B cell (primary cell): ENCODE measurements at regions of chr17 and their contacts with region 1.

Region 1: DNA sequence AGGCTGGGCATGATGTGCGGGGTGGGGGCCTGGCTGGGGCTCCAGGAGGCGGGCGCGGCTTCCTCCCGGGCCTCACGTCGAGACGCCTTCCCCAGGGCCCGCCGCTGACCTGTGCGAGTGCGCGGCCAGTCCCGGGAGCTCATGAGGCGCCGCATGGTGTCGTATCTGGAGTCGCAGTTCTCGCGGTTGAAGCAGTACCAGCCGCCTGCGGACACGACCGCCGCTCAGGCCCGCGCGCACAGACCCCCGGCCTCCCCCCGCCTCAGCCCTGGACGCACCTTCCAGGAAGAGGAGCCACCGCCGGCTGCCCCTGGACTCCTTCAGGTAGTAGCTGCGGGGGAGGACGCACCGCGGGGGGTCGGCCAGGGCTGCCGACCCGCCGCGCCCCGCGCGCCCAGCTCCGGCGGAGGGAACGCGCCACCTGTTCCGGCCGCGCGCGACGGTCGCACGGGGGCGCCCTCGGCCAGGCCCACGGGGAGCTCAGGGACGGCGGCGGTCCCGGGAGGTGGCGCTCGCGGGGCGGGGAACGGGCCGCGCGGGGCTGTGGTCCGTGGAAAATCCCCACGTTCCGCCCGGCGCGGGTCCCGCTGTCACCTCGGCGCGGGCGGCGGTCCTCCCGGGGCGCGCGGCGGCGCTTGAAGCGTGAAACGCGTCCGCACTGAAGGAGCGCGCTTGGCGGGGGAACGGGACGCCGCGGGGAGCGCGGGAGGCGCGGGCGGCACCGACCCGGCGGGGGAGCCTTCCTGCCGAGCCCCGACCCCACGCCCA is 1.4 kb downstream of the NOTUM start:
- DNase-seq: peak; percentile 90
- ATAC-seq: peak; percentile 95
- H3K4me3 ChIP-seq: peak overlapping the region in 4 of 5 experiments; percentile 21 to 55 (median 46)
- H3K4me3 Mint-ChIP-seq: peak overlapping the region; percentile 64
- H3K27ac ChIP-seq: no peak overlapping the region
- H3K27ac Mint-ChIP-seq: no peak overlapping the region
- H3K4me1 ChIP-seq: peaks cover 15 to 16% of the 10 kb centered on the region in 2 donors
- H3K4me1 Mint-ChIP-seq: peaks cover 1% of the 10 kb centered on the region
- H3K27me3 ChIP-seq: peaks cover 0 to 53% (median 28%) of the 10 kb centered on the region in 4 experiments
- H3K27me3 Mint-ChIP-seq: peaks cover 21% of the 10 kb centered on the region
- CTCF ChIP-seq: peak; percentile 86

Region 2: GRCh38 chr17:81977211-81978027 is 17.9 kb after region 1 on chr17 and contains the start of gene ASPSCR1:
- CTCF ChIA-PET with region 1: interaction called, 10 read pairs
- POLR2A ChIA-PET with region 1: no interaction called
- intact Hi-C with region 1: no loop called
- DNase-seq: peak; percentile 96
- ATAC-seq: peak; percentile 92
- H3K4me3 ChIP-seq: peak within 1 kb of the TSS; percentile 38 to 96 (median 79)
- H3K4me3 Mint-ChIP-seq: peak within 1 kb of the TSS; percentile 98
- H3K27ac ChIP-seq: peak within 1 kb of the TSS; percentile 63 to 91
- H3K27ac Mint-ChIP-seq: peak within 1 kb of the TSS; percentile 99
- H3K4me1 ChIP-seq: peaks cover 19 to 26% of the 10 kb centered on the region in 2 donors
- H3K4me1 Mint-ChIP-seq: peaks cover 29% of the 10 kb centered on the region
- H3K27me3 ChIP-seq: no peaks in the 10 kb centered on the region
- H3K27me3 Mint-ChIP-seq: peaks cover 3% of the 10 kb centered on the region
- CTCF ChIP-seq: no peak
- total RNA-seq, gene ASPSCR1: 46.7 and 50.4 TPM in 2 replicates

Region 3: DNA sequence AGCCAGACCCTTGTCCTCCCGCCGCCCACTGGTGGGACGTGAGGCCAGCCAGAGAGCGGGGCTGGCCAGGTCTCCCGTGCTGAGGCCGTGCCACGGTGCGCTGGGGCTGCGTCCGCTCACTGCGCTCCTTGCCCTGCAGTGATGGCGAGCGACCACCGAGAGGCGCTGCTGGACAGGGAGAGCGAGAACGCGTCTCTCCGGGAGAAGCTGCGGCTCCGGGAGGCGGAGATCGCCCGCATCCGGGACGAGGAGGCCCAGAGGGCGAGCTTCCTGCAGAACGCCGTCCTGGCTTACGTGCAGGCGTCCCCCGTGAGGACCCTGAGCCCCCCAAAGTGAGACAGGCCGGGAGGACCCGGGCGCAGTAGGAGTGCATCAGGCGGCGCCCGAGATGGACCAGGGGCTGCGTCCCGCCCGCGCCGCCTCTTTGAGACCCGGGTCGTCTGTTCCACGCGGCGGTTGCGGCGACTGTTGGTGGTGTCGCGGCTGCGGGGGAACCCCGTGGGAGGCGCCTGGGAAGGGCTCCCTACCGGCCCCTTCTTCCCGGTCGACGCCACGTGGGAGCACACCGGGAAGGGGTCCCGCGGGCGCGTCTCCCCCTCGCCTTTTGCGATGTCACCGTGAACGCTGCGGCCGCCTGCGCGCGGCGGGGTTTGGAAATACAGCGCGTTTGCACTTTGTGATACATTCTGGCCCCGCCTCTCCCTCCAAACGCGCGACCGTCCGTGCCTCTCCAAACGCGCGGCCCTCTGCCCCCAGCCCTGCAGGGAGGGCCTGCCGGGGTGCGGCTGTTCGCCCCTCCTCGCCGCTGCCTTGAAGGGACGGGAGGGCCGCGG is 71.1 kb after region 1 on chr17:
- CTCF ChIA-PET with region 1: interaction called, 19 read pairs
- POLR2A ChIA-PET with region 1: no interaction called
- intact Hi-C with region 1: no loop called
- DNase-seq: peak; percentile 86
- ATAC-seq: peak; percentile 89
- H3K4me3 ChIP-seq: peak overlapping the region in 4 of 5 experiments; percentile 45 to 59 (median 54)
- H3K4me3 Mint-ChIP-seq: peak overlapping the region; percentile 89
- H3K27ac ChIP-seq: no peak overlapping the region
- H3K27ac Mint-ChIP-seq: peak overlapping the region; percentile 41
- H3K4me1 ChIP-seq: peaks cover 17 to 21% of the 10 kb centered on the region in 2 donors
- H3K4me1 Mint-ChIP-seq: peaks cover 17% of the 10 kb centered on the region
- H3K27me3 ChIP-seq: peaks cover 0 to 39% (median 3%) of the 10 kb centered on the region in 4 experiments
- H3K27me3 Mint-ChIP-seq: no peaks in the 10 kb centered on the region
- CTCF ChIP-seq: peak; percentile 94

Region 4: GRCh38 chr17:82037113-82037888 is 77.8 kb after region 1 on chr17 and contains the start of gene DCXR:
- CTCF ChIA-PET with region 1: interaction called, 19 read pairs
- POLR2A ChIA-PET with region 1: no interaction called
- intact Hi-C with region 1: loop called (anchors 1 kb)
- DNase-seq: peak; percentile 98
- ATAC-seq: peak; percentile 91
- H3K4me3 ChIP-seq: peak within 1 kb of the TSS; percentile 34 to 76 (median 72)
- H3K4me3 Mint-ChIP-seq: peak within 1 kb of the TSS; percentile 90
- H3K27ac ChIP-seq: peak within 1 kb of the TSS; percentile 59 to 84
- H3K27ac Mint-ChIP-seq: peak within 1 kb of the TSS; percentile 99
- H3K4me1 ChIP-seq: peaks cover 18 to 20% of the 10 kb centered on the region in 2 donors
- H3K4me1 Mint-ChIP-seq: peaks cover 24% of the 10 kb centered on the region
- H3K27me3 ChIP-seq: peaks cover 0 to 4% (median 1%) of the 10 kb centered on the region in 4 experiments
- H3K27me3 Mint-ChIP-seq: no peaks in the 10 kb centered on the region
- CTCF ChIP-seq: peak; percentile 87
- total RNA-seq, gene DCXR: 63.9 and 70.7 TPM in 2 replicates

Region 5: DNA sequence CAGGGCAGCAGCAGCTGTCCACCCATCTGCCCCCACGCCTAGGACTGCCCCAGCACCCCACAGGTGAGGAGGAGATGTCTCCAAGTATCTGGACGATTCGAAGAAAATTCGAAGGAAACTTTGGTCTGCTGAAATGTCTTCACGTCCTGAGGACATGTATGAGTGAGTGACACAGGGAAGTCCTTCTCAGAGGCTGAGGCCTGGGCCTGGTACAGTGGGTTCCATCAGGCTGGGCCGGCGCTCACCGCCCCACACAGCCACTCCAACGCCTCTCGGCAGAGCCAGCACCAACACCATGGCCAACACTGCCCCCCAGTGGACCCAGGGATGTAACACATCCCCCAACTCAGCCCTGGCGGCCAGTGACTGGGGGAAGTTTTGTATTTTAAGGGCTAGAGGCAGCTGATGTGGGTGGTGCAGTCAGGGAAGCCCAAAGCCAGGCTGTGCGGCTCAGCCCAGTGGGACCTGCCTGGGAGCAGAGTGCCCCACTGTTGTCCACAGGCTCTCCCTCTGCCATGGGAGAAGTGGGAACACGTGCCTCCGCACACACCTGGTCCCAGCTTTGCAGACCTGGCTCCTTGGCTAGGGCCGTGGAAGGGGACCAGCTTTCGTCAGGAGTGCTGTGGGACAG is 194.3 kb after region 1 on chr17:
- CTCF ChIA-PET with region 1: interaction called, 39 read pairs
- POLR2A ChIA-PET with region 1: no interaction called
- intact Hi-C with region 1: no loop called
- DNase-seq: peak; percentile 84
- ATAC-seq: peak; percentile 99
- H3K4me3 ChIP-seq: no peak overlapping the region
- H3K4me3 Mint-ChIP-seq: no peak overlapping the region
- H3K27ac ChIP-seq: no peak overlapping the region
- H3K27ac Mint-ChIP-seq: no peak overlapping the region
- H3K4me1 ChIP-seq: peaks cover 0 to 2% of the 10 kb centered on the region in 2 donors
- H3K4me1 Mint-ChIP-seq: no peaks in the 10 kb centered on the region
- H3K27me3 ChIP-seq: no peaks in the 10 kb centered on the region
- H3K27me3 Mint-ChIP-seq: no peaks in the 10 kb centered on the region
- CTCF ChIP-seq: peak; percentile 94